MCF 10A (cell line): ENCODE measurements at regions of chr1 and their contacts with region 1.

Region 1: DNA sequence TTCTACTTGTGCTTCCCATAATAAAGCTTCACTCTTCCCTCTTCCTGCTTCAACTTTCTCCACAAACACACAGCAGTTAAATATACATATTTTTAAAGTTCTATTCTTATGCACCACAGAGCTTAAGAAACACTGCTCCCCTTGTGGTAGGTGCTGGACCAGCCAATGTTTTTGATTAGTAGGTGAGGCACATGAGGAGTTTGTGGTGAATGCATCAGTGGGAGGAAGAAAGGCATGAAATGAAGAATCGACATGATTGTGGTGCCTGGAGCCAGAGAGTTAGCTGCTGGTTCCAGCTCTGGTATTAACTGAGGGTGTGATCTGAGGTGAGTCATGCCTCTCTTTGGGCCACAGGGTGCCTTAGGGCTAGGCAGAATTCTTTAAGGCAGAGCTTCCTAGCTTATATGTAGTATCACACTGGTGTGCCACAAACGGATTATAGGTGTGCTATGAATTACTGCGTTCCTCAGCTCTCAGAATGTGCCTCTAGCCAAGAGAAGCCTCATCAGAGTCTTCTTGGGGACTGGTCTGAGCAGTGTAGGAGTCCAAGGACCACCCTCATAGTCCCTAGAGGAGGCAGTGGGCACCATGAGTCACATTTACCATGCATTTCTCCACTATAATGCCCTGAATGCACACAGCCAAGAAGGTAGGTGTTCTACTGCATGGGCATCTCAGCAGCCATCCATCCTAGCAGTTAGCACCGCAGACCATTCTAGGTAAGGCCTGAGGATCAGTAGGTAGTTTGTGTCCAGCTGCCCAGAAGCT is 97.4 kb upstream of the SGIP1 start:
- DNase-seq: peak; percentile 89
- H3K4me3 Mint-ChIP-seq: no peak overlapping the region
- H3K27ac Mint-ChIP-seq: peak overlapping the region; percentile 77
- H3K4me1 Mint-ChIP-seq: peaks cover 27% of the 10 kb centered on the region
- H3K27me3 Mint-ChIP-seq: no peaks in the 10 kb centered on the region
- CTCF ChIP-seq: peak; percentile 38

Region 2: DNA sequence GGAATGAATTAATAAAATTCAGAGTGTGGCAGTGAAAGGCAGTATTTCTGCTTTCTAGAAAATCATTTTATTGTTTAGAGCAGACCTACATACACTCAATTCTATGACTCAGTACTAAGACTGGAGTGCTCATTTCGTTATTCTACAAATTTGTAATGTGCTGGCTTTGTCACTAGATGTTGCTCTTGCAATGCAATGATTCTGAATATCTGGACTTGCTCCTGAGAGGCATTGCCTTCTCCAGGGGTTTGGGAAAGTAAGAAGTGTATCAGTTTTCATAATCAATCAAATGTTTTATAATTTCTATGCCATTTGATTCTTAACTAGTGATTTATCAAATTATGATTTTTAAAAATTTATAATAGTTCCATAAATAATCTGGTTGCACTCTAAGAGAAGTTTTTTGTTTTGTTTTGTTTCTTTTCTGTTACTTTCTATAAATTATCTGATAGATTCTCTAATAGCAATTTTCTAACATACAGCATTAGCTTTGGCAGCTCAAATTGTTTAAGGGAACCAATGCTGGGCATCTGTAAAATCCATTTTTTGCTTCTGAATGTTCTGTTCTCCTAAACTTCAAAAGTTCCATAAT is 183.1 kb before region 1 on chr1:
- CTCF ChIA-PET with region 1: interaction called, 687 read pairs
- POLR2A ChIA-PET with region 1: interaction called, 5 read pairs
- intact Hi-C with region 1: no loop called
- DNase-seq: peak; percentile 77
- H3K4me3 Mint-ChIP-seq: no peak overlapping the region
- H3K27ac Mint-ChIP-seq: no peak overlapping the region
- H3K4me1 Mint-ChIP-seq: peaks cover 32% of the 10 kb centered on the region
- H3K27me3 Mint-ChIP-seq: no peaks in the 10 kb centered on the region
- CTCF ChIP-seq: peak; percentile 77

Region 3: GRCh38 chr1:66271216-66271903 is 165.2 kb before region 1 on chr1:
- CTCF ChIA-PET with region 1: interaction called, 687 read pairs
- POLR2A ChIA-PET with region 1: interaction called, 7 read pairs
- intact Hi-C with region 1: no loop called
- DNase-seq: peak; percentile 97
- H3K4me3 Mint-ChIP-seq: peak overlapping the region; percentile 49
- H3K27ac Mint-ChIP-seq: peak overlapping the region; percentile 92
- H3K4me1 Mint-ChIP-seq: peaks cover 43% of the 10 kb centered on the region
- H3K27me3 Mint-ChIP-seq: no peaks in the 10 kb centered on the region
- CTCF ChIP-seq: no peak

Region 4: DNA sequence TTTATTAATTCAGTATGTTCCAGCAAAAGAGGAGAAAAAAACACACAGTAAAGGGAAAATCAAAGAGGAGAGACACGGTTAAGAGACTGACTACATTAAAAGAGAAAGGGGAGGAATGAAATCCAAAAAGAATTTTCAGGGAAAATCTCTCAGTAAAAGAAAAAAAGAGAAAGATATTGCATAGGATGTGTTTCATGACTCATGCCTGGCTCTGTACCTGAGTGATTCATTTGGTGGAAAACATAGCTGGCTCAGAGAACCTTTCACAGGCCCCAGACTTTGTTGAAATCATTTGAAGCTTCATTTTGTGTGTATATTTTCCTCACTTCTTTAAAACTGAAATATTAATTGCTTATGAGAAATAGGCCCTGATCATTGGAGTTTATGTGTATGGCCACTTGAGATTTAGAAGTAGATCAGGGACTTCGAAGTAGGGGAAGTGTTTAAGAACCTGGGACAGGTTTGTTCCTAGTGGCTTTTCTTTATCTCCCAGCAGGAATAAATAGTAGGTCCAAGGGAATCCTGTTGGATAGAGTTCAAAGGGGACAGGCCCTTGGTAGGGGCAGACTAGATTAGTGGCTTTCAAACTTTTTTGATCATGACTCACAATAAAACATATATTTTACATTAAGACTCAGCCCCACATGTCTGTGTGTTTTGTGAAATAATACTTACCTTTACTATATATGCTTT is 141.7 kb before region 1 on chr1:
- CTCF ChIA-PET with region 1: interaction called, 10 read pairs
- POLR2A ChIA-PET with region 1: interaction called, 4 read pairs
- intact Hi-C with region 1: no loop called
- DNase-seq: peak; percentile 85
- H3K4me3 Mint-ChIP-seq: peak overlapping the region; percentile 41
- H3K27ac Mint-ChIP-seq: peak overlapping the region; percentile 99
- H3K4me1 Mint-ChIP-seq: peaks cover 42% of the 10 kb centered on the region
- H3K27me3 Mint-ChIP-seq: no peaks in the 10 kb centered on the region
- CTCF ChIP-seq: no peak

Region 5: GRCh38 chr1:66396212-66396890 is 40.2 kb before region 1 on chr1:
- CTCF ChIA-PET with region 1: interaction called, 12 read pairs
- POLR2A ChIA-PET with region 1: no interaction called
- intact Hi-C with region 1: no loop called
- DNase-seq: no peak
- H3K4me3 Mint-ChIP-seq: no peak overlapping the region
- H3K27ac Mint-ChIP-seq: peak overlapping the region; percentile 61
- H3K4me1 Mint-ChIP-seq: peaks cover 8% of the 10 kb centered on the region
- H3K27me3 Mint-ChIP-seq: no peaks in the 10 kb centered on the region
- CTCF ChIP-seq: no peak